ENCODE measurements at regions of chr17 and their contacts with region 1.

Region 1: GRCh38 chr17:79400989-79401703 is 209.7 kb downstream of the RBFOX3 start:
- DNase-seq: peak; percentile 7
- H3K4me3 ChIP-seq: peak overlapping the region; percentile 34; the same call in 1 of the 2 replicates
- H3K27ac ChIP-seq: no peak overlapping the region
- H3K27me3 ChIP-seq: peaks cover 26% of the 10 kb centered on the region
- CTCF ChIP-seq: peak; percentile 95

Region 2: GRCh38 chr17:79294459-79295071 is 106.6 kb before region 1 on chr17:
- CTCF ChIA-PET with region 1: no interaction called
- POLR2A ChIA-PET with region 1: no interaction called
- DNase-seq: no peak
- H3K4me3 ChIP-seq: no peak overlapping the region
- H3K27ac ChIP-seq: no peak overlapping the region
- H3K27me3 ChIP-seq: no peaks in the 10 kb centered on the region
- CTCF ChIP-seq: no peak

Region 3: GRCh38 chr17:79361873-79362771 is 39.0 kb before region 1 on chr17:
- CTCF ChIA-PET with region 1: no interaction called
- POLR2A ChIA-PET with region 1: no interaction called
- DNase-seq: no peak
- H3K4me3 ChIP-seq: no peak overlapping the region
- H3K27ac ChIP-seq: no peak overlapping the region
- H3K27me3 ChIP-seq: peaks cover 7% of the 10 kb centered on the region
- CTCF ChIP-seq: no peak

Region 4: DNA sequence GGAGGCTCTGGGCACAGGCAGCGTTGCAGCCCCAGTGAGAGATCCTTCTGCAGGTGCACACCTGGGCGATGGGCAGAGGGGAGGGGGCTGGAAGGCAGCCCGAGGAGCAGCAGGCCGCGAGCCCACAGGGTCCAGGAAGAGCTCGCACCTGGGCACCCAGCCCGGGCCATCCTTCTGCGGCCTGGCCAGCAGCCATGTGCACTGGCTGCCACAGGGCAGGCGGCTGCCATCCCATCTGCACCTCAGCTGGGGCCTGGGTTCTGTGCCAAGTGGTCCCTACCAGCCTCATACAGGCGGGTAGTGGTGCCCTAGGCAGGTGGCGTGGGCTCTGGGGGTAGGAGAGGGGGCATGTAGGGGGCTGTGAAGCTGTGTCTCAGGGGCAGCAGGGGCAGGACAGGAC is 12.5 kb after region 1 on chr17:
- CTCF ChIA-PET with region 1: interaction called, 11 read pairs
- POLR2A ChIA-PET with region 1: no interaction called
- DNase-seq: no peak
- H3K4me3 ChIP-seq: no peak overlapping the region
- H3K27ac ChIP-seq: no peak overlapping the region
- H3K27me3 ChIP-seq: peaks cover 6% of the 10 kb centered on the region
- CTCF ChIP-seq: no peak

Region 5: GRCh38 chr17:79433379-79433778 is 32.2 kb after region 1 on chr17:
- CTCF ChIA-PET with region 1: no interaction called
- POLR2A ChIA-PET with region 1: no interaction called
- DNase-seq: no peak
- H3K4me3 ChIP-seq: no peak overlapping the region
- H3K27ac ChIP-seq: no peak overlapping the region
- H3K27me3 ChIP-seq: no peaks in the 10 kb centered on the region
- CTCF ChIP-seq: no peak

Measured in AG04450 (cell line).